ENCODE measurements at regions of chr20 and their contacts with region 1.

Region 1: GRCh38 chr20:11274141-11274594 is 600.4 kb upstream of the JAG1 start:
- DNase-seq: no peak
- ATAC-seq: peak; percentile 83 to 97 (median 90)
- H3K4me3 ChIP-seq: no peak overlapping the region
- H3K27ac ChIP-seq: no peak overlapping the region
- H3K4me1 ChIP-seq: peaks cover 5% of the 10 kb centered on the region
- H3K27me3 ChIP-seq: no peaks in the 10 kb centered on the region
- CTCF ChIP-seq: peak; percentile 74

Region 2: GRCh38 chr20:10316582-10316981 is 957.6 kb before region 1 on chr20:
- intact Hi-C with region 1: loop called in 1 of 2 experiments (anchors 5 kb)
- DNase-seq: no peak
- ATAC-seq: no peak
- H3K4me3 ChIP-seq: no peak overlapping the region
- H3K27ac ChIP-seq: no peak overlapping the region
- H3K4me1 ChIP-seq: no peaks in the 10 kb centered on the region
- H3K27me3 ChIP-seq: peaks cover 0 to 4% (median 0%) of the 10 kb centered on the region in 3 donors
- CTCF ChIP-seq: peak; percentile 35

Region 3: GRCh38 chr20:10553326-10553984 is 720.7 kb before region 1 on chr20:
- intact Hi-C with region 1: loop called (anchors 1 to 5 kb)
- DNase-seq: peak; percentile 63 to 79
- ATAC-seq: peak; percentile 67 to 89 (median 78)
- H3K4me3 ChIP-seq: no peak overlapping the region
- H3K27ac ChIP-seq: no peak overlapping the region
- H3K4me1 ChIP-seq: peaks cover 3% of the 10 kb centered on the region
- H3K27me3 ChIP-seq: no peaks in the 10 kb centered on the region
- CTCF ChIP-seq: peak; percentile 82

Region 4: GRCh38 chr20:10667077-10667401 is 607.1 kb before region 1 on chr20:
- intact Hi-C with region 1: loop called (anchors 5 kb)
- DNase-seq: peak; percentile 59 to 71
- ATAC-seq: peak; percentile 41 to 57 (median 55)
- H3K4me3 ChIP-seq: peak overlapping the region; percentile 97
- H3K27ac ChIP-seq: peak overlapping the region; percentile 61
- H3K4me1 ChIP-seq: peaks cover 43% of the 10 kb centered on the region
- H3K27me3 ChIP-seq: no peaks in the 10 kb centered on the region
- CTCF ChIP-seq: no peak

Region 5: DNA sequence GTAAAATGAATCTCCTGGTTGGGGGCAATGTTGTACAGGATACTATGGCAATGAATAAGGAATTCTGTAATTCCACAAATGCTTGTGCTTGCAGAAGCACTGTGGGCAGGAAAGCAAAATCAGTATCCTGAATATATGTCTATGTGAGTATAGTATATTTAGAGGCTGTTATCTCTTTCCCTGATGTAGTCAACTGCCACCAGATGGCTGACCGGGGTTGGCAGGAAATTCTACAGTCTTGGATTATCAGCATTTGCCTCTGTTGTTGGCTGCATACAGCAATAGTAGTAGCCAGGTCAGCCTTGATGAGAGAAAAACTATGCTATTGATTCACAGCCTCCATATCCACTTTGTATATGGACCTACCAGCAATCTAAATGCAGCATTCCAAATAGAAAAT is 175.3 kb before region 1 on chr20:
- intact Hi-C with region 1: loop called in 1 of 2 experiments (anchors 10 kb)
- DNase-seq: no peak
- ATAC-seq: no peak
- H3K4me3 ChIP-seq: no peak overlapping the region
- H3K27ac ChIP-seq: no peak overlapping the region
- H3K4me1 ChIP-seq: no peaks in the 10 kb centered on the region
- H3K27me3 ChIP-seq: no peaks in the 10 kb centered on the region
- CTCF ChIP-seq: no peak

Region 6: DNA sequence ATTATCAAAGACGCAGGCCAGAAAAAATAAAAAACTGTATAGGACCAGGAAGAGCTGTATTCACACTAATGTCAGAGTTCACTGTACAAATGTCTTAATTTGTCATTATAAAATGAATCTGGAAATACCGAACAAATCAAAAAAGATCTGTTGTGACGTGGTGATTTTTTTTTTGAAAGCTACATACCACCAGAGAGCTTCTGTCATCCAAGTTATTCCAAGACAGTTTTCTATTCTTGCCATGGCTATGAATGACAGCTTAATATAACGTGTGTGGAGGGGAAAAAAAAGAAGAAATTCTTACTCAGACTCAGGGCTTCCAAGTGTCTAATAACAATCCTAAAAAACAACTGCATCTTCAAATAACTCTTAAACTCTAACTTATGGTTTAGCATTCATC is 314.7 kb after region 1 on chr20:
- intact Hi-C with region 1: no loop called
- DNase-seq: no peak
- ATAC-seq: no peak
- H3K4me3 ChIP-seq: no peak overlapping the region
- H3K27ac ChIP-seq: no peak overlapping the region
- H3K4me1 ChIP-seq: no peaks in the 10 kb centered on the region
- H3K27me3 ChIP-seq: no peaks in the 10 kb centered on the region
- CTCF ChIP-seq: no peak